ENCODE measurements at regions of chr16 and their contacts with region 1.

Region 1: DNA sequence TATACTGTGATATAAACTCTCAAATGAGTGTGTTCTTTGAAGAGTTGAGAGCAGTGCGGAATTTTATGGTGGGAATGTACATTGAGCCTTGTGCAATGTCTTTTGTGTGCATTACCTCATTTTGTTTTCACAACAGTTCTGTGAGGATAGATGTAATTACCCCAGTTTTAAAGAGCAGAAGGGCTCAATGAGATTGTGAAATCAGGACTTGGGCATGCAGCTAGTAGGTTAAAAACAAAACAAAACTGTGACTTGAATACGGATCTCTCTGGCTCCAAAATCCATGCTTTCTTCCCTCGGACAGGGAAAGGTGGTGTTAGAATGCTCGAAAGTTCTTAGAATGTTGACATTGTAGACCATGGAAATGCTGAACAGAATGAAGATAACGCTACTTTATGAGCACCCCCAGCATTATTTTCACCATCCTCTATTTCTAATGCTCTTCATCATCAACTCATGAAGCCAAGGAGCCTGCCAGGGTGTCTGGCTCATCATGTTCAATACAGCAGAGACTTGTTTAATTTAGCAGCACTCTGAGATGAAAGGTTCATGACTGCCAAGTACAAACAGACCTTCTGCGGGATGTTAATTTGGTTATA is 17.1 kb downstream of the MRTFB start:
- DNase-seq: no peak
- H3K4me3 ChIP-seq: no peak overlapping the region
- H3K27ac ChIP-seq: no peak overlapping the region
- H3K27me3 ChIP-seq: no peaks in the 10 kb centered on the region
- CTCF ChIP-seq: no peak

Region 2: GRCh38 chr16:14539631-14540030 is 451.4 kb after region 1 on chr16:
- CTCF ChIA-PET with region 1: interaction called, 10 read pairs
- POLR2A ChIA-PET with region 1: no interaction called
- DNase-seq: no peak
- H3K4me3 ChIP-seq: no peak overlapping the region
- H3K27ac ChIP-seq: no peak overlapping the region
- H3K27me3 ChIP-seq: no peaks in the 10 kb centered on the region
- CTCF ChIP-seq: no peak

Measured in AG04450 (cell line).